Naive thymus-derived CD4-positive, alpha-beta T cell (primary cell): ENCODE measurements at regions of chr4 and their contacts with region 1.

Region 1: GRCh38 chr4:15702941-15703403 is at the start of gene BST1:
- DNase-seq: peak; percentile 39 to 60 (median 53)
- ATAC-seq: peak; percentile 93
- H3K4me3 ChIP-seq: peak within 1 kb of the TSS; percentile 67
- H3K4me3 Mint-ChIP-seq: peak within 1 kb of the TSS; percentile 85 to 97 (median 90)
- H3K27ac ChIP-seq: peak within 1 kb of the TSS; percentile 13
- H3K27ac Mint-ChIP-seq: peak within 1 kb of the TSS in 7 of 9 donors; percentile 34 to 91 (median 68)
- H3K4me1 ChIP-seq: no peaks in the 10 kb centered on the region
- H3K4me1 Mint-ChIP-seq: peaks cover 0 to 20% (median 12%) of the 10 kb centered on the region in 7 donors
- H3K27me3 ChIP-seq: no peaks in the 10 kb centered on the region
- H3K27me3 Mint-ChIP-seq: peaks cover 8 to 28% (median 9%) of the 10 kb centered on the region in 5 donors
- total RNA-seq, gene BST1: 0.65 to 41.8 (median 1.1) TPM

Region 2: GRCh38 chr4:15320121-15320678 is 382.8 kb before region 1 on chr4:
- CTCF ChIA-PET with region 1: no interaction called
- POLR2A ChIA-PET with region 1: no interaction called
- intact Hi-C with region 1: loop called in 1 of 2 experiments (anchors 5 kb)
- DNase-seq: no peak
- ATAC-seq: no peak
- H3K4me3 ChIP-seq: no peak overlapping the region
- H3K4me3 Mint-ChIP-seq: no peak overlapping the region
- H3K27ac ChIP-seq: no peak overlapping the region
- H3K27ac Mint-ChIP-seq: no peak overlapping the region
- H3K4me1 ChIP-seq: no peaks in the 10 kb centered on the region
- H3K4me1 Mint-ChIP-seq: peaks cover 0 to 13% (median 10%) of the 10 kb centered on the region in 7 donors
- H3K27me3 ChIP-seq: no peaks in the 10 kb centered on the region
- H3K27me3 Mint-ChIP-seq: peaks cover 0 to 34% (median 4%) of the 10 kb centered on the region in 5 donors

Region 3: GRCh38 chr4:15681207-15682015 is 21.6 kb before region 1 on chr4 and contains the start of gene FAM200B:
- CTCF ChIA-PET with region 1: no interaction called
- POLR2A ChIA-PET with region 1: no interaction called
- intact Hi-C with region 1: loop called (anchors 2 kb)
- DNase-seq: peak; percentile 87 to 100 (median 93)
- ATAC-seq: peak; percentile 98
- H3K4me3 ChIP-seq: peak within 1 kb of the TSS; percentile 78
- H3K4me3 Mint-ChIP-seq: peak within 1 kb of the TSS; percentile 88 to 99 (median 94)
- H3K27ac ChIP-seq: peak within 1 kb of the TSS; percentile 94
- H3K27ac Mint-ChIP-seq: peak within 1 kb of the TSS; percentile 89 to 100 (median 98)
- H3K4me1 ChIP-seq: peaks cover 5 to 11% of the 10 kb centered on the region in 2 donors
- H3K4me1 Mint-ChIP-seq: peaks cover 22 to 54% (median 42%) of the 10 kb centered on the region in 7 donors
- H3K27me3 ChIP-seq: no peaks in the 10 kb centered on the region
- H3K27me3 Mint-ChIP-seq: no peaks in the 10 kb centered on the region
- total RNA-seq, gene FAM200B: 10.6 to 42.8 (median 27.4) TPM